ENCODE measurements at regions of chr12 and their contacts with region 1.

Region 1: GRCh38 chr12:13864081-13864673 is 117.2 kb downstream of the GRIN2B start:
- DNase-seq: peak; percentile 64
- CTCF ChIP-seq: peak; percentile 94

Region 2: DNA sequence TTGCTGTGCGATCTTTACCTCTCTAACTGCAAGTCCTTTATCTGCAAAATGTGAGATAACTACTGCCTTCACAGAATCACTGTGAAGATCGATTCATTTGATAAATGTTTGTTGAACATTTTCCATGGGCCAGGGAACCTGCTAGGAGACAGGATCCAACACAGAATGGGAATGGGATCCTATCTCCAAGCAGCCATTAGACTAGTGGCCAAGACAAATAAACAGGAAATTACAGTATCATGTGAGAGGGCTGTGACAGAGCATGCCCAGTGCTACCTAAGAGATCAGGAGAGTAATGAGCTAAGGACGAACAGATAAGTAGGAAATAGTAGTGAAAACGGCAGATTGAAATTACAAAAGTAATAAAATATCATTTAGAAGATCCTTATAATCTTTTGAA is 11.6 kb after region 1 on chr12:
- CTCF ChIA-PET with region 1: interaction called, 12 read pairs
- POLR2A ChIA-PET with region 1: no interaction called
- DNase-seq: no peak
- CTCF ChIP-seq: no peak

Region 3: DNA sequence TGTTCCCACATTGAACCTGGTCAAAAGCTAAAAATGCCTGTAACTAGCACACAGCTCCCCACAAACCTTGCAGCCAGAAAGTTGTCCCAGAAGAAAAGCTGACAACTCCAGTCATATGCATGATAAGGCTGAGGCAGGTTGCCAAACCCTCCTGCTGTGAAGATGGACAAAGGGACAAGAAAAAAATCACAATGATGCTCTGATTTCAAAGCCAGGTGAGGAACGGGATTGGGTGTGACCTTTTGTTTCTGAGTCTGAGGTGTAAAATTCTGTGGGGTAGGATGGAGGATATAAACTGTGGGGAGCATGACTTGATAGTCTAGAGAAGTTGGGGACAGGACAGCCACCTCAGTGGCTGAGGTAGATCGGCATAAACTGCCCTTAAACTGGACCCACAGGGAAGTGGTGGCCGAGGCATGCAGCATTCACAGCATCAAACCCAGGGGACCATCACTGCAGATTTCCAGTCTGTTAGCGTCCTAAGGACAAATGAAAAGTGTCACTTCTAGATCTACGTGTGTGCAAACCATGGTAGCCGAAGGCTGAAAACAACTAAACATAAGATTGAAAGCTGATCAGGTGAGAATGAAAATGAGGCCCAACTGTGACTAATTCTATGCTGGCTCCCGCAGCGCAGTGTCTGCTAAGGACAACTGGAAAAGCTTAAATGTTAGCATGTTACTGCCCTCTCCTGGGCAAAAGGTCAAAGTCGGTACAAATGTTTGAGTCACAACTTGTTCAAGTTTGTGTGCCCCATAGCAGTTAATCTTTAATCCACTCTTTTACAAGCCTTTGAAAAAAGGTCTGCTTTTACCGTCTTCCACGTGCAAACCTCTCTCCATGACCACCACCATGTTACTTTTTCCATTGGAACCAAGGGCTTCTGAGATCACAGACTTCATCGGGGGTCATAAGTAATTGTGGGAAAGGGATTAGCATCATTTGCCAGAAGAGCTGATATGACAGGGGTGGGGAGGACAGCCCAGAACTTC is 77.4 kb after region 1 on chr12:
- CTCF ChIA-PET with region 1: interaction called, 22 read pairs
- POLR2A ChIA-PET with region 1: no interaction called
- DNase-seq: peak; percentile 39
- CTCF ChIP-seq: peak; percentile 36